CD8-positive, alpha-beta T cell (primary cell): ENCODE measurements at regions of chr11 and their contacts with region 1.

Region 1: GRCh38 chr11:73350908-73351636 is 25.1 kb upstream of the RELT start:
- DNase-seq: peak; percentile 36 to 84 (median 59)
- ATAC-seq: peak; percentile 98
- H3K4me3 ChIP-seq: no peak overlapping the region
- H3K4me3 Mint-ChIP-seq: no peak overlapping the region
- H3K27ac ChIP-seq: peak overlapping the region in 1 of 2 experiments; percentile 31
- H3K27ac Mint-ChIP-seq: no peak overlapping the region
- H3K4me1 ChIP-seq: no peaks in the 10 kb centered on the region
- H3K4me1 Mint-ChIP-seq: peaks cover 4% of the 10 kb centered on the region
- H3K27me3 ChIP-seq: no peaks in the 10 kb centered on the region
- H3K27me3 Mint-ChIP-seq: peaks cover 4% of the 10 kb centered on the region
- CTCF ChIP-seq: peak; percentile 99

Region 2: GRCh38 chr11:73085189-73085875 is 265.7 kb before region 1 on chr11:
- CTCF ChIA-PET with region 1: no interaction called
- POLR2A ChIA-PET with region 1: no interaction called
- intact Hi-C with region 1: no loop called
- DNase-seq: peak in 1 of 9 experiments; percentile 3
- ATAC-seq: no peak
- H3K4me3 ChIP-seq: no peak overlapping the region
- H3K4me3 Mint-ChIP-seq: no peak overlapping the region
- H3K27ac ChIP-seq: no peak overlapping the region
- H3K27ac Mint-ChIP-seq: peak overlapping the region; percentile 2
- H3K4me1 ChIP-seq: no peaks in the 10 kb centered on the region
- H3K4me1 Mint-ChIP-seq: peaks cover 30% of the 10 kb centered on the region
- H3K27me3 ChIP-seq: no peaks in the 10 kb centered on the region
- H3K27me3 Mint-ChIP-seq: no peaks in the 10 kb centered on the region
- CTCF ChIP-seq: no peak

Region 3: DNA sequence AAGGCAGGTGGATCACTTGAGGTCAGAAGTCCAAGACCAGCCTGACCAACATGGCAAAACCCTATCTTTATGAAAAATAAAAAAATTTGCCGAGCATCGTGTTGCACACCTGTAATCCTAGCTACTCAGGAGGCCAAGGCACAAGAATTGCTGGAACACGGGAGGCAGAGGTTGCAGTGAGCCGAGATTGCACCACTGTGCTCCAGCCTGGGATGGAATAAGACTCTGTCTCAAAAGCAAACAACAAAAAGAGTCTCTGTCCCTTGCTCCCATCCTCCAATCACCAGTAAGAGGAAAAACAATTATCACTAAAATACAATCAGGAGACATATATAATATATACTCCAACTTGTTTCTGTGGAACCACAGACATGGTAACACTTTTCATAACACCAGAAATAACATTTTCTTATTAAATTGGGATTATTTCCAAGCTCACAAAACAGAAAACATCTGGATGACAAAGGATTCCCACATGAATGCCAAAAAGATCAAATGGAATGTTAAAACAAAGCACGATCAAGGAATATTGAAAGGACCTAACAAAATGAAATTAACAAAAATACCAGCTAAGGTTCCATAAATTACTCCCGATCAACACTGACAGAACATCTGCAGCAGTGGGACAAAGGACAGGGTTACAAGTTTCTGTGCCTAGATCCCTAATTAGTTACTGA is 224.1 kb before region 1 on chr11:
- CTCF ChIA-PET with region 1: no interaction called
- POLR2A ChIA-PET with region 1: no interaction called
- intact Hi-C with region 1: no loop called
- DNase-seq: no peak
- ATAC-seq: no peak
- H3K4me3 ChIP-seq: no peak overlapping the region
- H3K4me3 Mint-ChIP-seq: no peak overlapping the region
- H3K27ac ChIP-seq: no peak overlapping the region
- H3K27ac Mint-ChIP-seq: no peak overlapping the region
- H3K4me1 ChIP-seq: no peaks in the 10 kb centered on the region
- H3K4me1 Mint-ChIP-seq: peaks cover 11% of the 10 kb centered on the region
- H3K27me3 ChIP-seq: no peaks in the 10 kb centered on the region
- H3K27me3 Mint-ChIP-seq: no peaks in the 10 kb centered on the region
- CTCF ChIP-seq: no peak

Region 4: DNA sequence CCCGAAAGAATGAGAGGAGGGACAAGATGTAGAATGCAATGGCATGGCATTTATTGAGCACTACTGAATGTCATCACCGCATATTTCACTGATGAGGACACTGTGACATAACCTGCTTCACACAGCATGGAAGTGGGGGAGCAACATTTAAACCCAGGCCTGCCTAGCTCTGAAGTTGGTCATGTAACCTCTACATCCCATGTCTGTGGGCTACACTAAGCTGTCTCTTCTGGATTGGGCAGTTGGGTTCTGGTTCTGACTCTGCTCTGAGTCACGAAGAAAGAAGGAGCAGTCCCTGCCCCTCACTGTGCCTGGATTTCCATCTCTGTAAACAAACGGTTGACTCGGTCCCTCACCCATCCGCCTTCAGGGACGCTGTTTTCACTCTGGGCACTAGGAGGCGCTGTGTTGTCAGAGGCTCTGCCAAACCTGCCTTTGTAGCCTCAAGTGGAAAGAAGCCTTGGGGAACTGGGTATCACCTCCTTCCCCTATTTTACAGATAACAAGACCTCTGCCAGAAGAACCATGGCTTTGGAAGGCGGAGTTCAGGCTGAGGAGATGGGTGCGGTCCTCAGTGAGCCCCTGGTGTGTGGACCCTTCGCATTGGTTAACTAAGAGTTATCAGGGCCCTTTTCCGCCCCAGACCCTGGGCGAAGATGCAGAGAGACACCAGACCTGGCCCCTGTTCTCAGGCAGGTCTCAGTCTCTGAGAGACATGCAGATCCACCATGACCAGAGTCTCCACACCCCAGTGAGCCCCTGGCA is 55.7 kb before region 1 on chr11:
- CTCF ChIA-PET with region 1: interaction called, 12 read pairs
- POLR2A ChIA-PET with region 1: no interaction called
- intact Hi-C with region 1: no loop called
- DNase-seq: peak; percentile 46 to 81 (median 71)
- ATAC-seq: peak; percentile 93
- H3K4me3 ChIP-seq: no peak overlapping the region
- H3K4me3 Mint-ChIP-seq: no peak overlapping the region
- H3K27ac ChIP-seq: no peak overlapping the region
- H3K27ac Mint-ChIP-seq: no peak overlapping the region
- H3K4me1 ChIP-seq: no peaks in the 10 kb centered on the region
- H3K4me1 Mint-ChIP-seq: peaks cover 2% of the 10 kb centered on the region
- H3K27me3 ChIP-seq: no peaks in the 10 kb centered on the region
- H3K27me3 Mint-ChIP-seq: peaks cover 14% of the 10 kb centered on the region
- CTCF ChIP-seq: peak; percentile 79

Region 5: DNA sequence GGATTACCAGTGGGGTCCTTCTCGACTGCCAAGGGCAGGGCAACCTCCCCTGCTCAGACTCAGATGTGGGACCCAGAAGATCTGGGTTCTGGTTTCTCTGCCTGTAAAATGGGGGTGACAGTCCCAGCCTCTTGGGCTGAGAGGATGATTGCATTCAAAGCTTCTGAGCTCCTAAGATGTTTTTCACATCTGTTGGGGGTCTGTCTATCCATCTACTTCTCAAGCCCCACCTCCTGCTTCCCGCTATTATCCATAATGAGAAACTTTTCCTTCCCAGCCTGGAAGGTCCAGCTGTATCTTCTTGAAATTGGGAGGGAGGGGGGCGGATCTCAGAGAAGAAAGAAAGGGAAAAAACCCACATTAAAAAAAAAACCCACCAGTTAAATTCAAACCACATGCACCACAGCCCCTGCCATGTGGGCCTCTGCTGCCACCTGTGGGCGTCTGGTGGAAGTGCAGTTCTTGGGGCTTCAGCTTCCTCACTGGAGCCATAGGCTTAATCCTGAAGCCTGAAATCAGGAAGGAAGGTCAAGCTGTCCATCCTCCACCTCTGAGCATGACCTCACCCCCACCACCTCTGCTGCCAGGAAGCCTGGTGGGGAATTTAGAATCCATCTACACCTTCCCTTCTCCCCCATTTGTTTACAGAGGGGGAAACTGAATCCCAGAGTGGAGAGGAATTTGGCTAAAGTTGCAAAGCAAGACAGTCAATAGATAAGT is 15.7 kb before region 1 on chr11:
- CTCF ChIA-PET with region 1: interaction called, 47 read pairs
- POLR2A ChIA-PET with region 1: no interaction called
- intact Hi-C with region 1: no loop called
- DNase-seq: peak; percentile 61 to 86 (median 79)
- ATAC-seq: peak; percentile 95
- H3K4me3 ChIP-seq: no peak overlapping the region
- H3K4me3 Mint-ChIP-seq: no peak overlapping the region
- H3K27ac ChIP-seq: no peak overlapping the region
- H3K27ac Mint-ChIP-seq: no peak overlapping the region
- H3K4me1 ChIP-seq: no peaks in the 10 kb centered on the region
- H3K4me1 Mint-ChIP-seq: no peaks in the 10 kb centered on the region
- H3K27me3 ChIP-seq: no peaks in the 10 kb centered on the region
- H3K27me3 Mint-ChIP-seq: peaks cover 5% of the 10 kb centered on the region
- CTCF ChIP-seq: peak; percentile 97

Region 6: GRCh38 chr11:73376160-73376802 is 25.2 kb after region 1 on chr11 and contains the start of gene RELT:
- CTCF ChIA-PET with region 1: interaction called, 76 read pairs
- POLR2A ChIA-PET with region 1: interaction called, 3 read pairs
- intact Hi-C with region 1: loop called (anchors 1 kb)
- DNase-seq: peak; percentile 88 to 96 (median 92)
- ATAC-seq: peak; percentile 95
- H3K4me3 ChIP-seq: peak within 1 kb of the TSS; percentile 74 to 86
- H3K4me3 Mint-ChIP-seq: peak within 1 kb of the TSS; percentile 96
- H3K27ac ChIP-seq: peak within 1 kb of the TSS; percentile 82 to 83
- H3K27ac Mint-ChIP-seq: peak within 1 kb of the TSS; percentile 96
- H3K4me1 ChIP-seq: peaks cover 23% of the 10 kb centered on the region
- H3K4me1 Mint-ChIP-seq: peaks cover 43% of the 10 kb centered on the region
- H3K27me3 ChIP-seq: no peaks in the 10 kb centered on the region
- H3K27me3 Mint-ChIP-seq: no peaks in the 10 kb centered on the region
- CTCF ChIP-seq: peak; percentile 95
- total RNA-seq, gene RELT: 144 to 158 TPM

Region 7: DNA sequence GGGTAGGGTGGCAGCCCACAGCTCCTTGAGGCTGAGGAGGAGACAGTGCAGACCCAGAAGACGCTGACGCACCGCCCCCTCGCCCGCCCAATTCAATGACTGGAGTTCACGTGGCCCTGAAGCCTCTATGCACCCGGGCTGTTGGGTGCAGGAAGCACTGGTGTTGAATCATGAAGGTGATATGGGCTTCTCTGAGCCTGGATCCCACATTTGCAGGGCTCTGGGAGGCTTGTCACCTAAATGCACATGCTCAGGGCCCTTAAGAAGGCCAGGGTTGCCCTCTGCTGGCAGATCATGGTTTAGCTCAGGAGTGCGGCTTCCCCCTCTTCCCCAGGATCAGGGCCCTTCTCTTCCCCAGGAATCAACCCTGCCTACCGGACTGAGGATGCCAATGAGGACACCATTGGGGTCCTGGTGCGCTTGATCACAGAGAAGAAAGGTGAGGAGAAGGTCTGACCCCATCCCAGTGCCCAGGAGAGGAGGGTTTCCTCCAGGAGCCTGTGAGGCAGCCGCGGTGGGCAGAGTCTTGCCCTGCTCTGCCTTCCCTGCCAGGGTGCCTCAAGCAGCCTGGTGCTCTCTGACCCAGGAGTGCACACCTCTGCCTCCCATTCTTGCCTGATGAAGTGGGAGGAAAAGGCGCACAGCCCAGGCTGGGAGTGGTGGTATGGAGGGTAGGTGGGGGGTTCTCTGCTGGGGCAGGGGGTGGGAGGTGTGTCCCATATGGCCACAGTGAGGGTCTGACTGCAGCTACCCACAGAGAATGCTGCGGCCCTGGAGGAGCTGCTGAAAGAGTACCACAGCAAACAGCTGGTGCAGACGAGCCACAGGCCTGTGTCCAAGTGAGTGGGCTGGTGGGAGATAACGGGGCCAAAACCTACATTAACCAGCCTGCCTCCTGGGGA is 42.7 kb after region 1 on chr11:
- CTCF ChIA-PET with region 1: interaction called, 233 read pairs
- POLR2A ChIA-PET with region 1: interaction called, 9 read pairs
- intact Hi-C with region 1: loop called in 1 of 2 experiments (anchors 1 kb)
- DNase-seq: peak; percentile 45 to 81 (median 71)
- ATAC-seq: peak; percentile 79
- H3K4me3 ChIP-seq: no peak overlapping the region
- H3K4me3 Mint-ChIP-seq: no peak overlapping the region
- H3K27ac ChIP-seq: no peak overlapping the region
- H3K27ac Mint-ChIP-seq: no peak overlapping the region
- H3K4me1 ChIP-seq: no peaks in the 10 kb centered on the region
- H3K4me1 Mint-ChIP-seq: peaks cover 3% of the 10 kb centered on the region
- H3K27me3 ChIP-seq: no peaks in the 10 kb centered on the region
- H3K27me3 Mint-ChIP-seq: no peaks in the 10 kb centered on the region
- CTCF ChIP-seq: peak; percentile 62

Region 8: GRCh38 chr11:73521621-73522020 is 170.5 kb after region 1 on chr11:
- CTCF ChIA-PET with region 1: no interaction called
- POLR2A ChIA-PET with region 1: no interaction called
- intact Hi-C with region 1: no loop called
- DNase-seq: no peak
- ATAC-seq: no peak
- H3K4me3 ChIP-seq: no peak overlapping the region
- H3K4me3 Mint-ChIP-seq: no peak overlapping the region
- H3K27ac ChIP-seq: no peak overlapping the region
- H3K27ac Mint-ChIP-seq: peak overlapping the region; percentile 19
- H3K4me1 ChIP-seq: peaks cover 9% of the 10 kb centered on the region
- H3K4me1 Mint-ChIP-seq: peaks cover 27% of the 10 kb centered on the region
- H3K27me3 ChIP-seq: no peaks in the 10 kb centered on the region
- H3K27me3 Mint-ChIP-seq: no peaks in the 10 kb centered on the region
- CTCF ChIP-seq: no peak

Region 9: GRCh38 chr11:73625696-73626318 is 274.7 kb after region 1 on chr11:
- CTCF ChIA-PET with region 1: interaction called, 8 read pairs
- POLR2A ChIA-PET with region 1: no interaction called
- intact Hi-C with region 1: loop called in 1 of 2 experiments (anchors 1 kb)
- DNase-seq: peak; percentile 53 to 80 (median 70)
- ATAC-seq: peak; percentile 95
- H3K4me3 ChIP-seq: no peak overlapping the region
- H3K4me3 Mint-ChIP-seq: no peak overlapping the region
- H3K27ac ChIP-seq: no peak overlapping the region
- H3K27ac Mint-ChIP-seq: no peak overlapping the region
- H3K4me1 ChIP-seq: no peaks in the 10 kb centered on the region
- H3K4me1 Mint-ChIP-seq: peaks cover 2% of the 10 kb centered on the region
- H3K27me3 ChIP-seq: no peaks in the 10 kb centered on the region
- H3K27me3 Mint-ChIP-seq: peaks cover 16% of the 10 kb centered on the region
- CTCF ChIP-seq: peak; percentile 99

Region 10: GRCh38 chr11:73838443-73839122 is 487.5 kb after region 1 on chr11:
- CTCF ChIA-PET with region 1: no interaction called
- POLR2A ChIA-PET with region 1: no interaction called
- intact Hi-C with region 1: no loop called
- DNase-seq: no peak
- ATAC-seq: no peak
- H3K4me3 ChIP-seq: no peak overlapping the region
- H3K4me3 Mint-ChIP-seq: no peak overlapping the region
- H3K27ac ChIP-seq: no peak overlapping the region
- H3K27ac Mint-ChIP-seq: no peak overlapping the region
- H3K4me1 ChIP-seq: no peaks in the 10 kb centered on the region
- H3K4me1 Mint-ChIP-seq: peaks cover 2% of the 10 kb centered on the region
- H3K27me3 ChIP-seq: no peaks in the 10 kb centered on the region
- H3K27me3 Mint-ChIP-seq: no peaks in the 10 kb centered on the region
- CTCF ChIP-seq: no peak